K562 (cell line): ENCODE measurements at regions of chr7 and their contacts with region 1.

Region 1: DNA sequence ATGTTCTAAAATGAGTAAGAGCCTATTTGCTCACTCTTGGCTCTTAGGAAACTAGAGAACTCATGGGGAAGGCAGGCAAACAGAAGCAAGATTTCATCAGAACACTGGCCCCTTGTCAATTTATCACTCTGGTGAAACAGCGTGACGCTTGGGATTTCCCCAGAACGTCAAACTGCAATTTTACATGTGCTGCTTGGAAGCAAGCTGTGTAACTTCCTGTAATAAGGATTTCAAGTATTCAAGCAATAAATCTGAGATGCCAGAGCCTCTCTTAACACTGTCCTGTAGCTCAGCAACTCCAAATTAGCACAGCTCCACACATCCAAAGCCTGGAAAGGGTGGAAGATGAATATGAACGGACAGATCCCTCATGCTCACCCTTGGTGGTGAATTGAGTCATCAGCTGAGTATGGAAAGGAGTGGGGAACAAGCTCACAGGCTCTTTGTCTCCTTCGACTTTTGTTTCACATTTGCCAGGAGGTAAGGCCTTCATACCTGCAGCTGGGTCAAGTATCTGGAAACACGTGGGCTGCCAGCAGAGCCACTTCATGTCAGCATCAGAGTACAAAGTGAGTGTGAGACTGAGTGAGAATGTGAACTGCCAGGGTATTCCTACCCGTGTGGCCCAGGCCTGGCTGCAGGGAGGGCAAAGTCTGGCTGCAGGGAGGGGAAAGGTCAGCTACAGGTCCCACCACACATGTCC is 140.4 kb upstream of the NAMPT start:
- DNase-seq: peak in 1 of 4 experiments; percentile 38
- ATAC-seq: peak; percentile 47
- H3K4me3 ChIP-seq: no peak overlapping the region
- H3K27ac ChIP-seq: no peak overlapping the region
- H3K4me1 ChIP-seq: peaks cover 0 to 16% of the 10 kb centered on the region in 2 experiments; a peak in 4 of 5 replicates
- H3K27me3 ChIP-seq: no peaks in the 10 kb centered on the region; a peak in 2 of 5 replicates
- CTCF ChIP-seq: no peak
- EP300 ChIP-seq: peak; percentile 57
- POLR2A ChIP-seq: no peak
- RAD21 ChIP-seq: peak in 1 of 2 experiments; percentile 23; a peak in 1 of 4 replicates

Region 2: GRCh38 chr7:106405697-106406141 is 19.4 kb before region 1 on chr7:
- CTCF ChIA-PET with region 1: no interaction called
- POLR2A ChIA-PET with region 1: no interaction called
- in situ Hi-C with region 1: no loop called
- intact Hi-C with region 1: no loop called
- DNase-seq: no peak
- ATAC-seq: no peak
- H3K4me3 ChIP-seq: no peak overlapping the region
- H3K27ac ChIP-seq: no peak overlapping the region
- H3K4me1 ChIP-seq: no peaks in the 10 kb centered on the region
- H3K27me3 ChIP-seq: 0 out of 5 replicates have a peak, but pooled peaks cover 0 to 2% of the 10 kb centered on the region in 2 experiments
- CTCF ChIP-seq: no peak
- EP300 ChIP-seq: no peak
- POLR2A ChIP-seq: no peak
- RAD21 ChIP-seq: no peak

Region 3: DNA sequence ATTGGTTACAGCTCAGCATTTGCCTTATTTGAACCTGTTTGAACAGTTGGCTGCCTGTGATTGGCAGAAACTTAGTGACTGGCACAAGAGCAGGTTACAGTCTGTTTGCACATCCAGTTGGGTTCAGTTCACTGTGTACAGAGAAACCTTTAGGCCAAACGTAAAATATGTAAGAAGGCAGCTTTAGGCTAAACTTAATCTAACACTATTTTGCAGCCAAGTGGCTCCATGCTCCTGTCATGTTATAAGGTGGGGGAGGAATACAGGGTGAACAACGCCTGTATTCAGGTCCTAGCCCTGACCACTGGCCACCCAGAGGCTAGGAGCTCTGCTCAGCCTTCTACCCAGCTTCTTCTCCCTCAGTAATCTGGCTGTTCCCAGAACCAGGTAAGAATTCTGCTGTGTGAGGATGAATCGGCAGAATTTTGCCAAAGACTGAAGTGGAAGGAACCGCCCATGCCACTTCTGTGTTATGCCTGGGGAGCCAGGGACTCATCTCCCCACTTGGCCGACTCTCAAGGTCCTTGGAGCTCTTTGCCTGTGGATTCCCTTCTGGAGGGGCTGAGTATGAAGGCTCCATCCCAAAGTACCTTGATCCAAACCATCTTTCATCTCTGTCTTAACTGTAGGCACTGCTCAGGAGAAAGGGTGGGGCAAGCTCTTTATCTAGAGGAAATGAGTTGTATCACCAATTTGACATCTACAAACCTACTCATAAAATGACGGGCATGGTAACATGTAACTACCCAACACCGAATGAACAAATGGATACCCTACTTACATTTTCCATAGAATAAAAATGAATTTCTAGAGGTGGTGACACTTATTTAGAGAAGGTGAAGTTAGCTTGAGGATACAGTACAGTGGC is 24.1 kb after region 1 on chr7:
- CTCF ChIA-PET with region 1: no interaction called
- POLR2A ChIA-PET with region 1: interaction called, 10 read pairs
- in situ Hi-C with region 1: no loop called
- intact Hi-C with region 1: no loop called
- DNase-seq: peak in 2 of 4 experiments; percentile 84 to 92
- ATAC-seq: peak; percentile 94
- H3K4me3 ChIP-seq: no peak overlapping the region
- H3K27ac ChIP-seq: peak overlapping the region; percentile 87
- H3K4me1 ChIP-seq: peaks cover 13 to 32% of the 10 kb centered on the region in 2 experiments; a peak in 4 of 5 replicates
- H3K27me3 ChIP-seq: no peaks in the 10 kb centered on the region
- CTCF ChIP-seq: peak in 1 of 3 experiments; percentile 0; a peak in 1 of 6 replicates
- EP300 ChIP-seq: peak; percentile 76
- POLR2A ChIP-seq: peak; percentile 77
- RAD21 ChIP-seq: peak; percentile 22 to 23; a peak in 3 of 4 replicates